ENCODE measurements at regions of chr17 and their contacts with region 1.

Region 1: DNA sequence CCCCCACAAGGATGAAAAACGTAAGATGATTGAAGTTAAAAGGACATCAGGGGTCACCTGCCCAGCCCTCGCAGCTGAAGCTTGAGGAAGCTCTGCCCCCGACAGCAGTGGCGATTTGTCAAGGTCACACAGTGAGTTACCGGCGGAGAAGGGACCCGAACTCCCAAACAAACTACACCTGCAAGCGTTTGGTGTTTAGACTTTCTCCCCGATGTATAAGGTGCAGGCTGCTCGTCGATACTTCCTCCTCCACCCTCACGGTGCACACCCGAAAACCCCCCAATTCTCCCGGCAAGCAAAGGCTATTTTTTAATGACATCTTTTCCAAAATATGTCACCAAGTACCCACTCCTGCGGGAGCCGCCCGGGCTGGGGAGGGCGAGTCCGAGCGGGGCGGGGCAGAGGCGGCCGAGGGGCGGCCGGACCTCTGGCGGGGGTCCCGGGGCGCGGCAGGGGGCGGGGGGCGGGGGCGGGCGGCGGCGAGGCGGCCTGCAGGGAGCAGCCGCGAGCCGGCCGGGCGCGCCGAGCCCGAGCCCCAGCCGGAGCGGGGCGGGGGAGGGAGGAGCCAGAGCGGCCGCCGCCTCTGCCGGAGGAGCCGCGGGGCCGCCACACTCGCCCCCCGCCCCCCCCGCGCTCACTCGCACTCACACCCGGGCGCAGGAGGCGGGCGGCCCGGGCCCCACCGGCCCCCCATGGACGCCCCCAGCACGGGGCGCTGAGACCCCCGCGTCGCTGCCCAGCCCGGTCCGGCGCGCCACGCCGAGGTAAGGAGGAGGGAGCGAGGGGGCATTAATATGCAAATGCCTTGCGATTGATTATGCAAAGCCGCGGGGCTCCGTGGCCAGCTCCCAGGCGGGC is at the start of gene THRA:
- DNase-seq: peak; percentile 100
- H3K4me3 Mint-ChIP-seq: peak within 1 kb of the TSS; percentile 54
- H3K27ac Mint-ChIP-seq: peak within 1 kb of the TSS; percentile 27
- H3K4me1 Mint-ChIP-seq: peaks cover 55% of the 10 kb centered on the region
- H3K27me3 Mint-ChIP-seq: peaks cover 52% of the 10 kb centered on the region
- CTCF ChIP-seq: no peak
- total RNA-seq, gene THRA: 107 and 133 TPM in 2 replicates

Region 2: GRCh38 chr17:40026816-40027613 is 35.5 kb before region 1 on chr17:
- CTCF ChIA-PET with region 1: interaction called, 57 read pairs
- intact Hi-C with region 1: no loop called
- DNase-seq: peak; percentile 100
- H3K4me3 Mint-ChIP-seq: no peak overlapping the region
- H3K27ac Mint-ChIP-seq: no peak overlapping the region
- H3K4me1 Mint-ChIP-seq: peaks cover 30% of the 10 kb centered on the region
- H3K27me3 Mint-ChIP-seq: no peaks in the 10 kb centered on the region
- CTCF ChIP-seq: no peak

Region 3: GRCh38 chr17:40121181-40122135 is 58.9 kb after region 1 on chr17 and contains the start of gene MSL1:
- CTCF ChIA-PET with region 1: interaction called, 670 read pairs
- intact Hi-C with region 1: no loop called
- DNase-seq: peak; percentile 100
- H3K4me3 Mint-ChIP-seq: peak within 1 kb of the TSS; percentile 86
- H3K27ac Mint-ChIP-seq: peak within 1 kb of the TSS; percentile 53
- H3K4me1 Mint-ChIP-seq: peaks cover 48% of the 10 kb centered on the region
- H3K27me3 Mint-ChIP-seq: no peaks in the 10 kb centered on the region
- CTCF ChIP-seq: no peak
- total RNA-seq, gene MSL1: 505 and 524 TPM in 2 replicates

Region 4: DNA sequence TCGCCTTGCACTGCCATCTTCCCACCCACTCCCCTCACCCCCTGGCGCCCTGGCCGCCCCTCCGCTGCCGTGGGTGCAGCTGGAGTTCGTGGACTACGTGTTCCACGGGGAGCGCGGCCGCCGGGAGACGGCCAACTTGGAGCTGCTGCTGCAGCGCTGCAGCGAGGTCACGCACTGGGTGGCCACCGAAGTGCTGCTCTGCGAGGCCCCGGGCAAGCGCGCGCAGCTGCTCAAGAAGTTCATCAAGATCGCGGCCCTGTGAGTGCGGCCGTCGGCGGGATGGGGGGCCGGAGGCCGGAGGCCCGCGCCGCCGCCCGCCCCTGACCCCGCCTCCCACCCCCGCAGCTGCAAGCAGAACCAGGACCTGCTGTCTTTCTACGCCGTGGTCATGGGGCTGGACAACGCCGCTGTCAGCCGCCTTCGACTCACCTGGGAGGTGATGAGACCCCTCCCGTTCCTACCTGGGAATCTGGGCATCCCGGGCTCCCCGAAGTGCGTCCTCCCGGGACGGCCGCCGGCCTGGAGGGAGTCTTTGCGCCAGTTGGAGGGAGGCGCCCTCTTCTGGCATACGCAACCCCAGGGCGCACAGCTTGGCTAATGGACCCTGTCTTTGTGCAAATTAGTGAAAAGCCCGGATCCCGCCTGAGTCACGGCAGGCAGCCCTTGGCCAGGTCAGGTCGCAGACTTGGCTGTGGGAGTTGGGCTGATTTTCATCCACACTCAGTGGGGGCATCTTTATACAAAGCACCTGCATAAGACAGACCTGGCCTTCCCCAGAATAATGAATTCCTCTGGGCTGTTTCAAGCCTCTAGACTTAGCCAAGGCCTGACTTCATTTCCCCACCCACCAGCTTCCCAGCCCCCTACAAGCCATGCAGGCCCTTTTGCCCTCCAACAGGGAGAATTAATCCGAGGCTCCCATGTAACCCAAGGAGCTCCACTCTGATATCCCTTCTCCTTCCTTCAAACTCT is 129.0 kb after region 1 on chr17:
- CTCF ChIA-PET with region 1: interaction called, 11 read pairs
- intact Hi-C with region 1: no loop called
- DNase-seq: no peak
- H3K4me3 Mint-ChIP-seq: no peak overlapping the region
- H3K27ac Mint-ChIP-seq: no peak overlapping the region
- H3K4me1 Mint-ChIP-seq: no peaks in the 10 kb centered on the region
- H3K27me3 Mint-ChIP-seq: no peaks in the 10 kb centered on the region
- CTCF ChIP-seq: no peak

Region 5: DNA sequence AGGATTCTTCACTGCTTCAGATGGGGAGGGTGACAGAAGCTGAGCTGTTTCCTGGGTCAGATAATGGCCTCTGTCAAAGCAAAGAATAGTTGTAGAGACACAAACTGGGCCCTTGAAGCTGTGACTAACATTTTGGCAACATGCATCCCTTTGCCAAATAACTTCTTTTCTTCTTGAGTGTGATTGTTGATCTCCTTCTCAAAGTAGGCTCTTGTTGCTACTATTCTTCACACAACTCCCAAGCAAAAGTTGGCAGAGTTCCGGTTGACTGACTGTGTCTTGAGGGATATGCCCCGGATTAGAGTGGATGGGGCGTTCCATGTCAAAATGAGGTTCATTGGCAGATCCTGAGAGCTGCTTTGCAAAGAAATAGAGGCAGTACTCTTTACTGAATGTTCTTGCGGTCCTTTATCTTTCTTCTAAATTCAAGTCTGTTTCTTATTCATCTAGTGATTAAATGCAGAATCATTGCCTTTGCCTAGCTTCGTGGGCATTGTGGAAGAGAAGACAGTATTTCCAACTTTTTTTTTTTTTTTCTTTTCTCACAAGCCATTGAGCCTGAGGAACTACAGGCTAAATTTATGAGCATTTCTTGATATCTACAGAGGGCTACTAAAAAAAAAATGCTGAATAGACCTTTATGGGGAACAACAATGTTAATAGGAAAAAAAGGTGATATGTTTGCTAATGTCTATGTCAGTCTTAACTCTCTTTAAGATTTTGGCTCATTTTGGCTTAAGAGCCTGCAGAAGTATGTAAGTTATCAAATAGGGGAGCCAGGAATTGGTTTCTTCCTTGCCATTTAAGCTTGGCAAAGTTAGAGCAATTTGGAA is 162.4 kb after region 1 on chr17:
- CTCF ChIA-PET with region 1: no interaction called
- intact Hi-C with region 1: no loop called
- DNase-seq: no peak
- H3K4me3 Mint-ChIP-seq: no peak overlapping the region
- H3K27ac Mint-ChIP-seq: no peak overlapping the region
- H3K4me1 Mint-ChIP-seq: peaks cover 24% of the 10 kb centered on the region
- H3K27me3 Mint-ChIP-seq: no peaks in the 10 kb centered on the region
- CTCF ChIP-seq: no peak